Breast epithelium (tissue), 4 donors: ENCODE measurements at regions of chr11 and their contacts with region 1.

Region 1: DNA sequence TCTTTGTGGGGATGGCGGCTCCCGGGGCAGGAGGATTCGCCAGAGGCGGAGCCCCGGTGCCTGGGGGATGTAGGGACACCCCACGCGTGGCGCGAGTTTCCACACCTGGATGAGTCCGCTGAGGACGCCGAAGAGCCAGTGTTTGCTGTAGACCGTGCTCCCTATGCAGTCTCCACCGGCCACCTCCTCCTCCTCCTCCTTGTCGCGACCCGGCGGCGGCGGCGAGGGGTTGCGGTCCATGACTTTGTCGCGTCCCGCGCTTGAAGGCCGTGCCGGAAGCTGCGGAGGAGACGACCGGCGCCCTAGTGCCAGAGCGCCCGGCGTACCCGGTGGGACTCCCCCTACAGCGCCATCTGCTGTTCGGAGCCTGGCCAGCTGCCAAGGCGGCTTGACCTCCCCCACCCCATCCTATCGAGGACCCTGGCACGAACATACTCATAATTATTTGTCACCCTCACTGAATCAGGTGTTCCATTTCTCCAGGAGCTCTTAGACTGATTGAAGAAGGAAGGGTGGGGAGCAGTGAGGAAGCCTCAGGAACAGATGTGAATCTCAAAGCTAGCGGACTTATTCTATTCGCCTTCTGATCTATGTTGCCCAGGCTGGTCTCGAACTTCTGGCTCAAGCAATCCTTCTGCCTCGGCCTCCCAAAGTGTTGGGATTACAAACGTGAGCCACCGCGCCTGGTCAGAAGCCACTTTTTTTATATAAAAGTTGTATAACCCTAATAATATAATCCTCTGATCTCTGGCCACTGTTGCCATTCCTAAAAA is at the start of gene SAAL1:
- DNase-seq: peak; percentile 66 to 85
- H3K4me3 ChIP-seq: peak within 1 kb of the TSS; percentile 91 to 96 (median 95)
- H3K27ac ChIP-seq: peak within 1 kb of the TSS; percentile 52 to 65
- H3K4me1 ChIP-seq: peaks cover 6% of the 10 kb centered on the region in 2 donors
- H3K27me3 ChIP-seq: no peaks in the 10 kb centered on the region
- CTCF ChIP-seq: peak; percentile 15 to 56 (median 46)
- POLR2A ChIP-seq: peak; percentile 22
- total RNA-seq, gene SAAL1: 12.3 to 16.4 (median 16.0) TPM

Region 2: GRCh38 chr11:17672469-17672868 is 433.5 kb before region 1 on chr11:
- intact Hi-C with region 1: no loop called
- DNase-seq: no peak
- H3K4me3 ChIP-seq: no peak overlapping the region
- H3K27ac ChIP-seq: no peak overlapping the region
- H3K4me1 ChIP-seq: no peaks in the 10 kb centered on the region
- H3K27me3 ChIP-seq: no peaks in the 10 kb centered on the region
- CTCF ChIP-seq: no peak
- POLR2A ChIP-seq: no peak

Region 3: DNA sequence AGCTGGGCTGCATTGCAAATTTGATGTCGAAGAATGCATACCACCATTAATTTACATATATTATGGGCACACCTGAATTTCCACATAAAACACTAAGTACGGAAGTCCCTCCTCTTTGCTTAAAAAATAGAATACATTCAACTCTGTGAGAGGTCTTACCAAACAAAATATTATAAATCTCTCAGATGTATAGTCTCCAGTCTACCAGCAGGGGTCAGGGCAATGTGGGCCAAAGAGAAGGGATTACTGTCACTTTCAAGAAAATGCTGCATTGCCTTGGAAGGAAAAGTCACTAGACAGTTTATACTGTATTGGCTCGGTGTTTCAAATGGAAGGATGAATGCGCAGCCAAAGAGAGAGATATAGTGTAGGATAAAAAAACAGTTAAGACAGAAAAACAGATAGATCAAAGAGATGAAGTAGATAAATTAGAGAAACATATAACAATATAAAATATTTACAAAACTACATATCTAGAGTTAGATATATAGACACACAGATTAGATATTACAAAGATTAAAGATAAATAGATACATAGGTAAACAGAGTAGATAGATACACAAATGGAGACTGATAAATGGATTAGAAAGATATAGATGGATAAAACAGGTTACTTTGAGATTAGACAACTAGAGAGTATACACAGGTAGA is 114.1 kb before region 1 on chr11:
- intact Hi-C with region 1: loop called (anchors 10 kb)
- DNase-seq: no peak
- H3K4me3 ChIP-seq: no peak overlapping the region
- H3K27ac ChIP-seq: no peak overlapping the region
- H3K4me1 ChIP-seq: no peaks in the 10 kb centered on the region
- H3K27me3 ChIP-seq: no peaks in the 10 kb centered on the region
- CTCF ChIP-seq: peak; percentile 66 to 78 (median 70)
- POLR2A ChIP-seq: no peak

Region 4: GRCh38 chr11:18706330-18707243 is 600.6 kb after region 1 on chr11:
- intact Hi-C with region 1: no loop called
- DNase-seq: peak; percentile 67 to 74
- H3K4me3 ChIP-seq: peak overlapping the region; percentile 55 to 86 (median 64)
- H3K27ac ChIP-seq: peak overlapping the region; percentile 94
- H3K4me1 ChIP-seq: peaks cover 0 to 4% of the 10 kb centered on the region in 2 donors
- H3K27me3 ChIP-seq: no peaks in the 10 kb centered on the region
- CTCF ChIP-seq: no peak
- POLR2A ChIP-seq: peak; percentile 4